ENCODE measurements at regions of chr16 and their contacts with region 1.

Region 1: DNA sequence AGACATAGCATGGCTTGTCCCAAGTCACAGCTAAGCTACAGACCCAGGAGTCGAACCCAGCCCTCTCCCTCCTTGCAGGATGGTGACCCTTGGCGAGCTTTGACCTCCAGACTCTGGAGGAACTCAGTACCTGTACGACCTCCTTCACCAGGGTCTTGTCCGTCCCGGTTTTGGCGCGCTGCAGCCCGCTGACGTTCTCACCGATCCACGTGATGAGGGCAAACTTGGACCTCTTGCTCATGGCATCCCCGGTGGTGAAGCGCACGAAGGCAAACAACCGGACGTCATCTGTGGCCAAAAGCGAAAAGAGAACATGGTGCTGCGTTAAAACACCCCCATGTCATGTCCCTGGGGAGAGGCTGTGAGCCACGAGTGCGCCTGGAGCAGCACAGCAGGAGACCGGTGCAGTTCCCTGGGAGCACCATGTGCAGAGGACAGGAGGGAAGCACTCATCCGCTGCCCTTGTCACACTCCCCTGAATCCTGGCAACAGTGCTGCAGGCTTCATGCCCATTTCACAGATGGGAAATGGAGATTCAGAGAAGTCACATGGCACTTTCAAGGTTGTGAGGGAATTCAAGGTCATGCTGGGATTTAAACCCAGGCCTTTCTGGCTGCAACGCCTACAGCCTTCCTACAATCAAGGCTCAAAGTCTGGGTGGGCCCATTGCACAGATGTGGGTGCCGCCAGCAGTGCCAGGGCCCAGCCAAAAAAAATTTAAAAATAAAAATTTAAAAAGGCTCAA is 27.7 kb downstream of the COTL1 start:
- DNase-seq: no peak
- H3K4me3 ChIP-seq: no peak overlapping the region
- CTCF ChIP-seq: no peak
- POLR2A ChIP-seq: no peak

Region 2: GRCh38 chr16:84520725-84521496 is 69.2 kb before region 1 on chr16:
- intact Hi-C with region 1: loop called (anchors 2 kb)
- DNase-seq: no peak
- H3K4me3 ChIP-seq: no peak overlapping the region
- CTCF ChIP-seq: no peak
- POLR2A ChIP-seq: no peak

Region 3: GRCh38 chr16:84754353-84754856 is 164.3 kb after region 1 on chr16:
- intact Hi-C with region 1: no loop called
- DNase-seq: peak in 1 of 2 donors; percentile 85
- H3K4me3 ChIP-seq: no peak overlapping the region
- CTCF ChIP-seq: peak in 1 of 3 donors; percentile 54
- POLR2A ChIP-seq: no peak

Region 4: DNA sequence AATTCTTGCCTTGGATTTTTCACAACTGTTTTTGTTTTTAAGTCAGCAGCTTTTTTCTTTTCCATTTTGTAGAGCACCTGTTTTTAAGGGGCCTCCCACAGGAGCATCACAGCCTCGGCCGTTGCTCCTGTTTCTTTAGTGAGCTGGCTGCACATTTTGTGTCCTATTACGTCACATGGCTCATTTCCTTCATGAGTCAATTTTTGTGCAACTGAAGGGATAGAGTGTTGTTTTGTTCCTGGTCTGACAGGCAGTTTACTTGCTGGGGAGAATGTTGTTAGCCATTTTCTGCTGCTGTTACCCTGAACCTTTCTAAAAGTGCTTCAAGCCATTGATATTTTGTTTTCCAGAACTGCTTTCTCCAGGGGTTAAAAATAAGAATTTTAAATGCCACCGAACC is 184.7 kb after region 1 on chr16:
- intact Hi-C with region 1: no loop called
- DNase-seq: peak; percentile 45 to 70
- H3K4me3 ChIP-seq: no peak overlapping the region
- CTCF ChIP-seq: no peak
- POLR2A ChIP-seq: no peak